Activated T-helper 1 cell treated with anti-CD3 and anti-CD28 coated beads, Interleukin-12 subunit alpha, Interleukin-12 subunit beta, Interleukin-2, Interleukin-4 antibody, amounts not matched to agents 30 ng/mL and 10 ng/mL and 1 ng/mL, durations not matched to agents 14 hours and 24 hours and 36 hours (primary cell): ENCODE measurements at regions of chr1 and their contacts with region 1.

Region 1: GRCh38 chr1:12344596-12345349 is 114.9 kb downstream of the VPS13D start:
- DNase-seq: no peak
- H3K4me3 Mint-ChIP-seq: peak overlapping the region; percentile 74
- H3K27ac Mint-ChIP-seq: peak overlapping the region; percentile 70
- H3K4me1 Mint-ChIP-seq: peaks cover 63% of the 10 kb centered on the region
- H3K27me3 Mint-ChIP-seq: no peaks in the 10 kb centered on the region

Region 2: GRCh38 chr1:12296623-12297022 is 48.1 kb before region 1 on chr1:
- intact Hi-C with region 1: loop called (anchors 2 kb)
- DNase-seq: no peak
- H3K4me3 Mint-ChIP-seq: peak overlapping the region; percentile 50
- H3K27ac Mint-ChIP-seq: peak overlapping the region; percentile 72
- H3K4me1 Mint-ChIP-seq: peaks cover 46% of the 10 kb centered on the region
- H3K27me3 Mint-ChIP-seq: no peaks in the 10 kb centered on the region

Region 3: DNA sequence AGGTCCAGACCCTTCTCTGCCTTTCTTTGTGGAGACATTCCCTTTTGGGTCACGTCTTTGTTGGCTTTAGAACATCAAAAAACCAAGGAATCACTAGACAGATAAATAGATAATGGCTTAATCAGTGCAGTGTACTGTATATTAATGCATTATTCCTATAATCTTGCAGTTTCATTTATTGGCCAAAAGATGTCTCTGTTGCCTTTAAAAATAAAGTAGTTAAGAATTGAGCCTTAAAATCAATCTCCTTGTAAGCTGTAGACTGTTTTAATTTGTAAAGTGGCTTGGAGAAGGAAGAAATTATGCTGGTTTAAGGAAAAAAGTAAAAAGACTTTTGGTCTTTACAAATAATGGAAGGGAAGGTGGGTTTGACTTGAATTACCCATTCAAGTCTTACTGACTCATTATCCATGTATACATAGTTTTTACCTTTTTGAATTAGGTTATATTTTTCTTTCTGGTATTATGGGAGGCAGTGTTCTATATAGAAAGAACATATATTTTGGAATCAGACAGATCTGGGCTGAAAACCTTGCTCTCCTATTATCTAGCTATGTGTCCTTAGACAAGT is 30.4 kb before region 1 on chr1:
- intact Hi-C with region 1: no loop called
- DNase-seq: no peak
- H3K4me3 Mint-ChIP-seq: no peak overlapping the region
- H3K27ac Mint-ChIP-seq: no peak overlapping the region
- H3K4me1 Mint-ChIP-seq: peaks cover 8% of the 10 kb centered on the region
- H3K27me3 Mint-ChIP-seq: no peaks in the 10 kb centered on the region

Region 4: GRCh38 chr1:12333036-12333785 is 11.6 kb before region 1 on chr1:
- intact Hi-C with region 1: no loop called
- DNase-seq: no peak
- H3K4me3 Mint-ChIP-seq: no peak overlapping the region
- H3K27ac Mint-ChIP-seq: no peak overlapping the region
- H3K4me1 Mint-ChIP-seq: no peaks in the 10 kb centered on the region
- H3K27me3 Mint-ChIP-seq: no peaks in the 10 kb centered on the region

Region 5: DNA sequence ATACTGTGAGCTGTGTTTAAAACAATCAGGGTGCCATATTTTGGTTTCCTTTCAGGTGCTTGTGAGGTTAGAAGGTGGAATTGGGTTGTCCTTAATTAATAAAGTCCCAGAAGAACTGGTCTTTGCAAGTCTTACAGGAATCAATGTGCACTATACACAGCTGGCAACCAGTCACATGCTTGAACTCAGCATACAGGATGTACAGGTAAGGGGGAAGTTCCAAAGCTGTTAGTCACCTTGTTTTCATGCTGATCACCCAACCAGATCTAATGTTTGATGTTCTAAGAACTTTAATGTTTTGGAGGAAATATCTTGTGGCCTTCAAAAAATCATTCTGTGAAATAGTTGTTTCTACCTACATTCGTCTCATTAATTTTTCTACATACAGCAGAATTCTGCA is 41.4 kb after region 1 on chr1:
- intact Hi-C with region 1: loop called (anchors 2 kb)
- DNase-seq: no peak
- H3K4me3 Mint-ChIP-seq: peak overlapping the region; percentile 38
- H3K27ac Mint-ChIP-seq: peak overlapping the region; percentile 70
- H3K4me1 Mint-ChIP-seq: peaks cover 58% of the 10 kb centered on the region
- H3K27me3 Mint-ChIP-seq: no peaks in the 10 kb centered on the region

Region 6: GRCh38 chr1:12415038-12415466 is 70.3 kb after region 1 on chr1:
- intact Hi-C with region 1: no loop called
- DNase-seq: no peak
- H3K4me3 Mint-ChIP-seq: no peak overlapping the region
- H3K27ac Mint-ChIP-seq: no peak overlapping the region
- H3K4me1 Mint-ChIP-seq: peaks cover 22% of the 10 kb centered on the region
- H3K27me3 Mint-ChIP-seq: no peaks in the 10 kb centered on the region

Region 7: DNA sequence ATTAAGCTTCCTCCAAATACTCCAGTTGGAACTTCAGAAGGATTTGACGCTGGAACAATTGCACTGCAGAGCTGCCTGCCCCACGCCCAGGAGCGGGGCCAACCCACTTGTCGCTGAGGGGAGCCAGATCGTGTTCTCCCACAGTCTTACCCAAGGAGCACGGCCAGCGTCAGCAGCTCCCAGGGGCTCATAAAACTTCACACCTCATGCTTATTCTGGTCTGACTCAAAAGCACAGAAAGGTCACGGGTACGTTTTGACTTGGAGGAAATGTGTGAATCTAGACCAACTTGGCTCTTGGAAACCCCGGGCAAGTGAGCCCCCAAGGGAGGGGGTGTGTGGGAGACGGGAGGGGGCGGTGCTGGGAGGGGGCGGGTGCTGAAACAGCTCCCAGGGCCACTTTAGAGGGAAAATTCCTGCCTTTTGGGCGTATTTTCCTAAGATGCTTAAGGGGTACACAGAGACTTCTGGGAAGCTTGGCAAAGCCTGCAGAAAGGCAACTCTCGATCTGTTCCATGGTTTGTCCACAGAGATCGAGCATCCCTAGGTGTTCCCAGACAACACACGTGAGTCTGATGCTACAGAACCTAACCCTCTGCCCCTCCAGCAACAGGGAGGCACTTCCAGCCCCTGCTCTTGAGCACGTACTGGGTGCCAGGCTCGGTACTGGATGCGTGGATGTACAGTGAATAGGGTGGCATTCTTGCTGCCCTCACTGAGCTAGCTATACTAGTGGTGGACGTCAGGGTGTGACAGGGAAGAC is 174.3 kb after region 1 on chr1:
- intact Hi-C with region 1: loop called (anchors 5 kb)
- DNase-seq: peak; percentile 21
- H3K4me3 Mint-ChIP-seq: no peak overlapping the region
- H3K27ac Mint-ChIP-seq: peak overlapping the region; percentile 73
- H3K4me1 Mint-ChIP-seq: peaks cover 38% of the 10 kb centered on the region
- H3K27me3 Mint-ChIP-seq: no peaks in the 10 kb centered on the region